ENCODE measurements at regions of chr1 and their contacts with region 1.

Region 1: DNA sequence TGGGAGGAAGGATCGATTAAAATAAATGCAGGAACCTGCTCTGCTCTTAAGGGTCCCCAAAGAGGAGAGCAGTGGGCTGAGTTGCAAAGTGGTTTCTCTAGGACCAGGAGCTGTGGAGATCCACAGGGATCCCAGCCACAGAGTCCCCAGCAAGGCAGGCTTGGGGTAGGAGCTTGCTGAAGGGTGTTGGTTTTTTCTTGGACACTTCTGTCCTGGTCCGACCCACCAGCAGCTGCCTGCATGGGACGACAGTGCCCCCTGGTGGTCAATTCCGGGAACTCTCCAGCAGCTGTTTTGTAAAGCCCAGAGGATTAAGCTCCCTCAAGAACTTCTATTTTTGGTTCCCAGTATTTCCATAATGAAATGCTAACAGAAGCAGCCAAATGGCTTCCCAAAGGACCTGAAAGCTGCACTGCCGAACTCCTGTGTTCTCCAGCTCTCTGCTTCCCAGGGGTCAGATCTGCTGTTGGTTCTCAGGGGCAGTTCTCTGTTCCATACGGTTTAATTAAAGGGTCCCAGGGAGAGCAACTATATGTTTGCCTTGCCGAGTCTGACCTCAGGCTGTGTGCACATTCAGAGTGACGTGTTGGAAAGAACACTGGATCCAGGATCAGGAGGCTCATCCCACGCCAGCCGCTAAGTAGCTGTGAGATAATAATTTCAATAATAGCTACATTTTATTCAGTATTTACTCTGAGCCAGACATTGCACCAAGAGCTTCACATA is 23.2 kb downstream of the NENF start:
- DNase-seq: peak; percentile 91
- ATAC-seq: peak; percentile 78
- H3K4me3 Mint-ChIP-seq: no peak overlapping the region
- H3K27ac Mint-ChIP-seq: no peak overlapping the region
- H3K4me1 Mint-ChIP-seq: peaks cover 4% of the 10 kb centered on the region
- H3K27me3 Mint-ChIP-seq: no peaks in the 10 kb centered on the region
- CTCF ChIP-seq: peak; percentile 99

Region 2: GRCh38 chr1:212012034-212012740 is 443.8 kb before region 1 on chr1:
- CTCF ChIA-PET with region 1: interaction called, 21 read pairs
- POLR2A ChIA-PET with region 1: no interaction called
- intact Hi-C with region 1: no loop called
- DNase-seq: peak; percentile 78
- ATAC-seq: peak; percentile 100
- H3K4me3 Mint-ChIP-seq: no peak overlapping the region
- H3K27ac Mint-ChIP-seq: no peak overlapping the region
- H3K4me1 Mint-ChIP-seq: peaks cover 3% of the 10 kb centered on the region
- H3K27me3 Mint-ChIP-seq: no peaks in the 10 kb centered on the region
- CTCF ChIP-seq: peak; percentile 92

Region 3: DNA sequence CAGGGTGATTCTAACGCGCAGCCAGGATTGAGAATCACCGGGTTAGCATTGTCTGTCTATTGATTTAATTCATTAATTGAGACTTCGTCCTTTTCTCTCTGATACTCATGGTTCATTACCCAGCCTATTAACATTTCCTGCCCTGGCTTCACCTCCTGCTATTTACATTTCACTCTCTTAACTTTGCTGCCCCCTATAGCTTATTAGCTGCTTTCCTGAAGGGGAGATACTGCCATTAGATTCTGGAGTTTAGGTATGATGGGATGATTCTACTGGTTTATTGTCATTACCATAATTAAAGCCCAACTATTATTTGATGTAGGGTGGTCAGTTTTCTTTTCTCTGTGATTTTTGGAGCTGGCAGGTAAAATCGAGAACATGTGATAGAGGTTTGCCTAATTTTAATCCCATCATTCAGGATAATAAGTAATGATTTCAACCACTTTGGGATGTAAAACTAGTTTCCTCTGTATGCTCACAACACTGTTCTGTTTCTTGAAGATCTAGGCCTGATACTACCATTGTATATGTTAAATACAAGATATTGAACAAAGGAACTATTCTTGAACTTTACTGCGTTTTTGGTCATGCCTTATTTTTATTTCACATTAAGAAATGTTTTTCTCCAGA is 164.3 kb before region 1 on chr1:
- CTCF ChIA-PET with region 1: interaction called, 21 read pairs
- POLR2A ChIA-PET with region 1: no interaction called
- intact Hi-C with region 1: no loop called
- DNase-seq: no peak
- ATAC-seq: peak; percentile 55
- H3K4me3 Mint-ChIP-seq: no peak overlapping the region
- H3K27ac Mint-ChIP-seq: peak overlapping the region; percentile 4
- H3K4me1 Mint-ChIP-seq: peaks cover 74% of the 10 kb centered on the region
- H3K27me3 Mint-ChIP-seq: no peaks in the 10 kb centered on the region
- CTCF ChIP-seq: peak; percentile 58

Region 4: GRCh38 chr1:212414328-212415106 is 41.4 kb before region 1 on chr1 and contains the start of gene PACC1:
- CTCF ChIA-PET with region 1: interaction called, 17 read pairs
- POLR2A ChIA-PET with region 1: interaction called, 3 read pairs
- intact Hi-C with region 1: no loop called
- DNase-seq: peak; percentile 97
- ATAC-seq: peak; percentile 99
- H3K4me3 Mint-ChIP-seq: peak within 1 kb of the TSS; percentile 94
- H3K27ac Mint-ChIP-seq: peak within 1 kb of the TSS; percentile 93
- H3K4me1 Mint-ChIP-seq: peaks cover 28% of the 10 kb centered on the region
- H3K27me3 Mint-ChIP-seq: no peaks in the 10 kb centered on the region
- CTCF ChIP-seq: no peak
- total RNA-seq, gene PACC1: 11.1 to 11.7 TPM

Region 5: GRCh38 chr1:212529211-212529741 is 73.3 kb after region 1 on chr1:
- CTCF ChIA-PET with region 1: interaction called, 10 read pairs
- POLR2A ChIA-PET with region 1: no interaction called
- intact Hi-C with region 1: no loop called
- DNase-seq: no peak
- ATAC-seq: no peak
- H3K4me3 Mint-ChIP-seq: no peak overlapping the region
- H3K27ac Mint-ChIP-seq: no peak overlapping the region
- H3K4me1 Mint-ChIP-seq: no peaks in the 10 kb centered on the region
- H3K27me3 Mint-ChIP-seq: peaks cover 11% of the 10 kb centered on the region
- CTCF ChIP-seq: no peak

Region 6: GRCh38 chr1:212782422-212783154 is 326.6 kb after region 1 on chr1:
- CTCF ChIA-PET with region 1: interaction called, 32 read pairs
- POLR2A ChIA-PET with region 1: no interaction called
- intact Hi-C with region 1: no loop called
- DNase-seq: no peak
- ATAC-seq: peak; percentile 68
- H3K4me3 Mint-ChIP-seq: no peak overlapping the region
- H3K27ac Mint-ChIP-seq: no peak overlapping the region
- H3K4me1 Mint-ChIP-seq: peaks cover 23% of the 10 kb centered on the region
- H3K27me3 Mint-ChIP-seq: no peaks in the 10 kb centered on the region
- CTCF ChIP-seq: peak; percentile 86

Measured in activated CD8-positive, alpha-beta T cell treated with anti-CD3 and anti-CD28 coated beads for 36 hours (primary cell).